K562 (cell line): ENCODE measurements at regions of chr3 and their contacts with region 1.

Region 1: GRCh38 chr3:45167011-45167911 is 21.1 kb upstream of the CDCP1 start:
- DNase-seq: peak; percentile 87 to 96 (median 88)
- ATAC-seq: peak; percentile 95
- H3K4me3 ChIP-seq: no peak overlapping the region
- H3K27ac ChIP-seq: peak overlapping the region; percentile 59
- H3K4me1 ChIP-seq: peaks cover 12 to 59% of the 10 kb centered on the region in 2 experiments
- H3K27me3 ChIP-seq: no peaks in the 10 kb centered on the region
- CTCF ChIP-seq: peak in 2 of 3 experiments; percentile 3 to 11; a peak in 1 of 6 replicates
- EP300 ChIP-seq: peak; percentile 53; the same call in 1 of the 2 replicates
- POLR2A ChIP-seq: peak; percentile 75
- RAD21 ChIP-seq: peak in 1 of 2 experiments; percentile 48; a peak in 3 of 4 replicates

Region 2: GRCh38 chr3:45055411-45056143 is 111.7 kb before region 1 on chr3:
- CTCF ChIA-PET with region 1: no interaction called
- POLR2A ChIA-PET with region 1: no interaction called
- in situ Hi-C with region 1: no loop called
- intact Hi-C with region 1: loop called (anchors 1 kb)
- DNase-seq: peak; percentile 58 to 89 (median 68)
- ATAC-seq: peak; percentile 82
- H3K4me3 ChIP-seq: no peak overlapping the region
- H3K27ac ChIP-seq: peak overlapping the region; percentile 32; the same call in 2 of the 3 replicates
- H3K4me1 ChIP-seq: peaks cover 21 to 74% of the 10 kb centered on the region in 2 experiments
- H3K27me3 ChIP-seq: no peaks in the 10 kb centered on the region
- CTCF ChIP-seq: peak; percentile 64 to 82 (median 73); a peak in 5 of 6 replicates
- EP300 ChIP-seq: no peak
- POLR2A ChIP-seq: no peak
- RAD21 ChIP-seq: peak; percentile 72 to 79

Region 3: GRCh38 chr3:45210308-45211041 is 43.2 kb after region 1 on chr3:
- CTCF ChIA-PET with region 1: no interaction called
- POLR2A ChIA-PET with region 1: no interaction called
- in situ Hi-C with region 1: no loop called
- intact Hi-C with region 1: loop called (anchors 2 kb)
- DNase-seq: peak; percentile 81 to 88 (median 84)
- ATAC-seq: peak; percentile 99
- H3K4me3 ChIP-seq: no peak overlapping the region
- H3K27ac ChIP-seq: no peak overlapping the region
- H3K4me1 ChIP-seq: peaks cover 4 to 11% of the 10 kb centered on the region in 2 experiments; a peak in 3 of 5 replicates
- H3K27me3 ChIP-seq: no peaks in the 10 kb centered on the region
- CTCF ChIP-seq: peak; percentile 96 to 97 (median 96)
- EP300 ChIP-seq: peak; percentile 26; the same call in 1 of the 2 replicates
- POLR2A ChIP-seq: no peak
- RAD21 ChIP-seq: peak; percentile 96 to 98